CD8-positive, alpha-beta memory T cell (primary cell): ENCODE measurements at regions of chr10 and their contacts with region 1.

Region 1: DNA sequence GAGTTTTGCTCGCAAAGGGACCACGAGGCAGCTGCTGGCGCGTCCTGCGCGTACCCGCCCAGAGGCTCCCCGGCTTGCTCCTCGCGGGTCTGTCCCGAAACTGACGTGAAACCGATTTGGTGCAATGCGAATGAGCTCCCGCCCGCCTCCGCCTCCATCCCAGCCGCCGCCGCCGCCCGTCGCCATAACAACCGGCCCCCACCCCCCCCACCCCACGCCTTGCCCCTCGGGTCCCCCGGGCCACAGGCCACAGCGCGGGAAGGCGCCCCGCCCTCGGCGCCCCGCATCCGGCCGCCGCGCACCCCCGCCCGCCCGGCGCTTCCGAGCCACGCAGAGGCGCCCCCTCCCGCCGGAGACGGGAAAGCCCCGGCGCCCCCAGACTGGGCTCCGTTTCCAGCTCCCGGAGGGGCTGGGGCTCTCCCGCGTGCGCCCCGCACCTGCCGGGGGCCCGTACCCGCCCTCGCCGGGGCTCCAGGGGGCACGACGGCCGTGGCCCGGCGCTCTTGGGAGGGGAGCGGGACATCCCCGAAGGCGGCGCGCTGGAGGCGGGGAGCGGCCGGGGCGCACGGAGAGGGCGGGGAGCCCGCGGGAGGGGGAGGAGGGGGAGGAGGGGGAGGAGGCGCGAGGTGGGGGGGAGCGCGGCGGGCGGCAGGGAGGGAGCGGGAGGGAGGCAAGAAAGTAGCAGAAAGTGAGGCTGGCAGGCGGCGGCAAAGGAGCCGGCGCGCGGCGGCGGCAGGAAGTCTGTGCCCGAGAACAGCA is at the start of gene CAMK1D:
- DNase-seq: peak; percentile 83 to 94 (median 90)
- H3K4me3 ChIP-seq: peak within 1 kb of the TSS; percentile 87
- H3K4me3 Mint-ChIP-seq: peak within 1 kb of the TSS; percentile 96 to 99 (median 98)
- H3K27ac ChIP-seq: peak within 1 kb of the TSS; percentile 74
- H3K27ac Mint-ChIP-seq: peak within 1 kb of the TSS; percentile 95 to 100 (median 98)
- H3K4me1 ChIP-seq: peaks cover 18% of the 10 kb centered on the region
- H3K4me1 Mint-ChIP-seq: peaks cover 37 to 49% (median 44%) of the 10 kb centered on the region in 3 donors
- H3K27me3 ChIP-seq: no peaks in the 10 kb centered on the region
- H3K27me3 Mint-ChIP-seq: peaks cover 0 to 5% of the 10 kb centered on the region in 2 donors
- total RNA-seq, gene CAMK1D: 8.9 to 10.0 TPM

Region 2: GRCh38 chr10:11192304-11193000 is 1156.6 kb before region 1 on chr10:
- CTCF ChIA-PET with region 1: no interaction called
- POLR2A ChIA-PET with region 1: interaction called, 10 read pairs
- DNase-seq: no peak
- H3K4me3 ChIP-seq: no peak overlapping the region
- H3K4me3 Mint-ChIP-seq: peak overlapping the region; percentile 48 to 81 (median 63)
- H3K27ac ChIP-seq: no peak overlapping the region
- H3K27ac Mint-ChIP-seq: peak overlapping the region in 6 of 8 donors; percentile 90 to 97 (median 90)
- H3K4me1 ChIP-seq: peaks cover 92% of the 10 kb centered on the region
- H3K4me1 Mint-ChIP-seq: peaks cover 34 to 95% (median 34%) of the 10 kb centered on the region in 3 donors
- H3K27me3 ChIP-seq: no peaks in the 10 kb centered on the region
- H3K27me3 Mint-ChIP-seq: no peaks in the 10 kb centered on the region

Region 3: GRCh38 chr10:12448729-12449391 is 99.8 kb after region 1 on chr10:
- CTCF ChIA-PET with region 1: interaction called, 3 read pairs
- POLR2A ChIA-PET with region 1: interaction called, 13 read pairs
- DNase-seq: peak; percentile 60 to 90 (median 83)
- H3K4me3 ChIP-seq: peak overlapping the region; percentile 11
- H3K4me3 Mint-ChIP-seq: peak overlapping the region; percentile 24 to 82 (median 75)
- H3K27ac ChIP-seq: peak overlapping the region; percentile 67
- H3K27ac Mint-ChIP-seq: peak overlapping the region; percentile 86 to 99 (median 94)
- H3K4me1 ChIP-seq: peaks cover 13% of the 10 kb centered on the region
- H3K4me1 Mint-ChIP-seq: peaks cover 28 to 54% (median 43%) of the 10 kb centered on the region in 3 donors
- H3K27me3 ChIP-seq: no peaks in the 10 kb centered on the region
- H3K27me3 Mint-ChIP-seq: no peaks in the 10 kb centered on the region